ENCODE measurements at regions of chr1 and their contacts with region 1.

Region 1: GRCh38 chr1:222455188-222455879 is 92.6 kb downstream of the HHIPL2 start:
- DNase-seq: peak; percentile 50
- H3K4me3 ChIP-seq: no peak overlapping the region
- H3K27me3 ChIP-seq: no peaks in the 10 kb centered on the region; the same call in 1 of the 2 replicates
- CTCF ChIP-seq: peak; percentile 92

Region 2: DNA sequence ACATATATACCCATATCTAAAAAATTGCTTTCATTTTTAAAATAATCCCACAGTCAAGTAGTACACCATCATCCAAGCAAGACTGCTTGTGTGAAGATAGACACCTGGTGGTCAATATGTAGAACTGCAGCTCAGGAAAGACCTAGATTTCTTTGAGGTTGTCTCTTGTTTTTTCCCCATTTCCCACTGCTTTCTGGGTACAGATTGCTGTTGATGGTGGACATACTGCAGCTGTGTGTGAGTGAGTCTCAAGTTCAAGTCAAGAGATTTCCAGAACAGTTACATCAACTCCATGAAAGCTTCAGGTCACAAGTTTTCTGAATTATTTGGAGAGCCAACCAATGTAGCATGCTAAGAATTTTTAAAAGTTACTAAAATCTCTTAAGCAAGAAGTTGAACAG is 1019.8 kb before region 1 on chr1:
- CTCF ChIA-PET with region 1: interaction called, 11 read pairs
- POLR2A ChIA-PET with region 1: interaction called, 3 read pairs
- DNase-seq: no peak
- H3K4me3 ChIP-seq: no peak overlapping the region
- H3K27me3 ChIP-seq: no peaks in the 10 kb centered on the region
- CTCF ChIP-seq: peak; percentile 86

Region 3: GRCh38 chr1:221478050-221478949 is 977.0 kb before region 1 on chr1:
- CTCF ChIA-PET with region 1: interaction called, 52 read pairs
- POLR2A ChIA-PET with region 1: no interaction called
- DNase-seq: no peak
- H3K4me3 ChIP-seq: no peak overlapping the region
- H3K27me3 ChIP-seq: no peaks in the 10 kb centered on the region
- CTCF ChIP-seq: peak; percentile 93

Region 4: DNA sequence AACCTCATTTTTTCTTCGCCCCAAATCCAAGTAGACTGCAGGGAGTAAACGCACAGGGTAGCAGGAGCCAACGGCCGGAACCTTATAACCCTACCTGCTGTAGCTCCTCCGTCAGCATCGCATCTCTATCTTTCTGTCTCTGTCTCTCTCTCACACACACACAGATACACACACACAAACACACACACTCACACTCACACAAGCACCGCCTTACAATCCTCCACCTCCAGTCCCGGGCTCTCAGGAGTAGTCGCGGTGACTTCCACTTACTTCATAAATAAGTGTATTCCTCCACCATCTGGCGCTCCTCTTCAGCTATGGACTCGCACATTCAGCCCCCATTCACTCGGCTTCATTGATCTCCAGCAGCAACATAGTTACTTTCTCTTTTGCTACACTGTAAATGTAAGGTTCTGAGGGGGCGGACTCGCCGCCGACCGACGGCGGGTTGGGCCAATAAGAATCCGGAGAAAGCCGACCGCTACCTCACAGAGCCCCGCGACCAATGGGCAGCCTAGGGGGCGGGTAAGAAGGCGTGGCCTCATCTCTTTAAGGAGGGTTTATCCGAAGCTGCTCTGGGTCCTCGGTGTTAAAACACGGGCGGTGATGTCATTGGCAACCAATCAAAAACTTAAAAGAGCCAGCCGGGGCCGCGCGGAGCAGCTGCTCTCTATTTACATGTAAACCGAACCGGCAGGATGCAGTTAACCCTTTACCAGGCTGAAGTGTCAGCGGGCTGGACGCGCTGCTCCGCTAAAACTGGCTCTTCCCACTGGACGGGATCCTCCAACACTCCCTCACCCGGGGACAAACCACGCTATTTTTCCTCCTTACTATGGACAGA is 713.4 kb before region 1 on chr1 and contains the start of gene DUSP10:
- CTCF ChIA-PET with region 1: interaction called, 37 read pairs
- POLR2A ChIA-PET with region 1: no interaction called
- DNase-seq: peak; percentile 99
- H3K4me3 ChIP-seq: peak within 1 kb of the TSS; percentile 84
- H3K27me3 ChIP-seq: no peaks in the 10 kb centered on the region
- CTCF ChIP-seq: 0 out of 2 replicates have a peak, but pooled peaks have one; percentile 9
- polyA plus RNA-seq, gene DUSP10: 13.3 and 16.1 TPM in 2 replicates

Region 5: DNA sequence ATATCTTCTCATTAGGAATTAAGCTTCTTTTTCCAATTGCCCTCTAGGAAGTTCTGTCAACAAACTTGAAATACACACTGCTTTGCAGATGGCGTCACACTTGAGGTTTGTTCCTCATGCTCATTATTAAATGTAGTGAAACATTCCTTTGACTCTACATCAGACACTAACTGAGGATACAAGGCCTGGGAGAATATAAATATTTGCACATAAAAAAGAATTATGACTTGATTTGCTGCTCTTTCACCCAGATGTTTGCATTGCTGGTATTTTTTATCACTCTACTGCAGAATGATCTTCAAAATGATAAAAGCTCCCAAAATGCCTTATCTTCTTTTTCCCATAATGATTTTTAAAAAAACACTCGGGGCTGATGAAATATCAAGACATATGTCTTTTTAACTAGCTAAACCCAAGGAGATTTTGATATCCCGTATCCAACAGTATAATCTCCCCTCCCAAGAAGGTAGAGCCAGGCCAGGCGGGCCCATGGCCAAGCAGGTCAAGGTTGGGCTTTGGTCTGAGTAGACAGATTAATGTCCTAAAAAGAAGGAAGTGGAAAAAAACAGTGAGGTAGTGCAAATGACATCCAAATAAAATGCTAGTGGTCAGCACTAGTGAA is 172.1 kb before region 1 on chr1:
- CTCF ChIA-PET with region 1: interaction called, 10 read pairs
- POLR2A ChIA-PET with region 1: no interaction called
- DNase-seq: peak; percentile 97
- H3K4me3 ChIP-seq: no peak overlapping the region
- H3K27me3 ChIP-seq: no peaks in the 10 kb centered on the region
- CTCF ChIP-seq: no peak

Region 6: DNA sequence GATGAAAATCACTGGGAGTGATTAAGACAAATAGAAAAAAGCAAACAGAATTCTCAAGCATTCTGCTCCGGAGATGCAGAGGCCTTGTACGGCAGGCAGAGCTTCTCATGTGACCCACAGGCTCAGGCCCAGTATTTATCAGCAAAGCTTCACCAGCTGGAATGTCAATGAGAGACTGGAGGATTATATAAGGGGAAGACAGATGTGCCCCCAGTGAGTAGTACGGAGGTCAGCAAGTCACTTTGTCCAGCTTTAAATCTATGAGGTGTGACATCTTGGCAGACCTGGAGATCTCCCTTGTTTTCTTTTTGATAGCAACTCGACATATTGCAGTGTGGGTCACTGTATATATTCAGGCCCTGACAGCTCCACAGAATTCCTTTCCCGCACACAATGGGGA is 14.3 kb before region 1 on chr1:
- CTCF ChIA-PET with region 1: interaction called, 27 read pairs
- POLR2A ChIA-PET with region 1: interaction called, 3 read pairs
- DNase-seq: no peak
- H3K4me3 ChIP-seq: no peak overlapping the region
- H3K27me3 ChIP-seq: no peaks in the 10 kb centered on the region; the same call in 1 of the 2 replicates
- CTCF ChIP-seq: no peak

Region 7: GRCh38 chr1:222465211-222466041 is 10.1 kb after region 1 on chr1:
- CTCF ChIA-PET with region 1: interaction called, 17 read pairs
- POLR2A ChIA-PET with region 1: no interaction called
- DNase-seq: peak; percentile 80
- H3K4me3 ChIP-seq: peak overlapping the region; percentile 31
- H3K27me3 ChIP-seq: no peaks in the 10 kb centered on the region
- CTCF ChIP-seq: peak; percentile 79